ENCODE measurements at regions of chr18 and their contacts with region 1.

Region 1: GRCh38 chr18:58043491-58044379 is at the start of gene NEDD4L:
- DNase-seq: peak; percentile 92
- H3K4me3 ChIP-seq: peak within 1 kb of the TSS; percentile 50 to 83 (median 78)
- H3K27ac ChIP-seq: peak within 1 kb of the TSS; percentile 75 to 90 (median 87)
- H3K4me1 ChIP-seq: peaks cover 0 to 34% (median 22%) of the 10 kb centered on the region in 4 donors
- H3K27me3 ChIP-seq: no peaks in the 10 kb centered on the region
- CTCF ChIP-seq: peak; percentile 70 to 91 (median 80)
- EP300 ChIP-seq: no peak
- POLR2A ChIP-seq: no peak
- total RNA-seq, gene NEDD4L: 52.0 to 62.9 (median 55.9) TPM

Region 2: GRCh38 chr18:57621246-57621604 is 422.5 kb before region 1 on chr18:
- intact Hi-C with region 1: loop called (anchors 5 kb)
- DNase-seq: no peak
- H3K4me3 ChIP-seq: peak overlapping the region; percentile 67 to 92 (median 84)
- H3K27ac ChIP-seq: peak overlapping the region; percentile 89 to 95 (median 92)
- H3K4me1 ChIP-seq: peaks cover 0 to 26% (median 19%) of the 10 kb centered on the region in 4 donors
- H3K27me3 ChIP-seq: no peaks in the 10 kb centered on the region
- CTCF ChIP-seq: no peak
- EP300 ChIP-seq: no peak
- POLR2A ChIP-seq: no peak

Region 3: GRCh38 chr18:57881818-57882413 is 161.8 kb before region 1 on chr18:
- intact Hi-C with region 1: loop called (anchors 5 kb)
- DNase-seq: peak; percentile 83
- H3K4me3 ChIP-seq: no peak overlapping the region
- H3K27ac ChIP-seq: no peak overlapping the region
- H3K4me1 ChIP-seq: no peaks in the 10 kb centered on the region
- H3K27me3 ChIP-seq: no peaks in the 10 kb centered on the region
- CTCF ChIP-seq: peak; percentile 75 to 88 (median 84)
- EP300 ChIP-seq: no peak
- POLR2A ChIP-seq: no peak

Region 4: DNA sequence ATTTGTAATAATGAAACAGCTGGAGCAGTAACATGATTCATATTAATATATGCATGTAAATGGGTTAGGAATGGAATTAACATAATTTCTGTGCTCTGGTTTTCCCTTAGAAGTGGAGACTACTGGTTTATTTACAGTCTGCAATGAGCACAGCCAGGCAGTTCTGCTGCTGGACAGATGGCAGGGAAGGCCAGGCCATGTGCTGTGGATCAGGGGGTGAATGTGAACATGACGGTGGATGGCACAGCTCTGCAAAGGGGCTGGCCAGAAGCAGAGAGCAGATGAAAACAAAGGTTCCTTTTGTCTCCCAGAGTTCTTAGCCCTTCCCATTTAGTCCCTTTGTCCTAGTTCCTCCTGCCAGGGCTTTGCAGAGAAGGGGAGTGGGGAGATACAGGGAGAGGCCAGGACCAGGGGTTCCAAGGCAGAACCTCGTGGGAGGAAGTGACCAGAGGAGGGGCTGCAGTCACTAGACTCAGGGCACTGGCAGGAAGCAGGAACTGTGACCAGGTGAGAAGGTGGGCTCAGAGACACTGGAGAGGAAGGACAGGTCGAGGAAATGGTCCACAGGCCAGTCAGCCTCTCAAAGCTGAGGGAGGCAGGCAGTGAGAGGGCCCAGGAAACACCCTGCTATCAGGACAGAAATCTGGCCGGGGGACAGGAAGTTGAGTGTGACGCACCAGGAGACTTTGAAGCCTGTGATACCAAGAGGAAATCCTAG is 127.7 kb before region 1 on chr18:
- intact Hi-C with region 1: no loop called
- DNase-seq: no peak
- H3K4me3 ChIP-seq: no peak overlapping the region
- H3K27ac ChIP-seq: peak overlapping the region in 1 of 4 donors; percentile 5
- H3K4me1 ChIP-seq: peaks cover 0 to 7% (median 0%) of the 10 kb centered on the region in 4 donors
- H3K27me3 ChIP-seq: no peaks in the 10 kb centered on the region
- CTCF ChIP-seq: no peak
- EP300 ChIP-seq: no peak
- POLR2A ChIP-seq: no peak

Region 5: GRCh38 chr18:58148954-58149471 is 105.3 kb after region 1 on chr18:
- intact Hi-C with region 1: no loop called
- DNase-seq: no peak
- H3K4me3 ChIP-seq: no peak overlapping the region
- H3K27ac ChIP-seq: peak overlapping the region in 2 of 4 donors; percentile 58 to 79
- H3K4me1 ChIP-seq: peaks cover 0 to 28% (median 27%) of the 10 kb centered on the region in 4 donors
- H3K27me3 ChIP-seq: no peaks in the 10 kb centered on the region
- CTCF ChIP-seq: no peak
- EP300 ChIP-seq: no peak
- POLR2A ChIP-seq: peak in 1 of 2 donors; percentile 41

Region 6: GRCh38 chr18:58180738-58181353 is 137.1 kb after region 1 on chr18:
- intact Hi-C with region 1: loop called (anchors 1 kb)
- DNase-seq: no peak
- H3K4me3 ChIP-seq: no peak overlapping the region
- H3K27ac ChIP-seq: no peak overlapping the region
- H3K4me1 ChIP-seq: peaks cover 0 to 56% (median 39%) of the 10 kb centered on the region in 4 donors
- H3K27me3 ChIP-seq: no peaks in the 10 kb centered on the region
- CTCF ChIP-seq: peak; percentile 65 to 87 (median 76)
- EP300 ChIP-seq: no peak
- POLR2A ChIP-seq: no peak

Region 7: GRCh38 chr18:58316396-58317342 is 272.9 kb after region 1 on chr18:
- intact Hi-C with region 1: loop called (anchors 5 kb)
- DNase-seq: no peak
- H3K4me3 ChIP-seq: no peak overlapping the region
- H3K27ac ChIP-seq: peak overlapping the region; percentile 65 to 76 (median 74)
- H3K4me1 ChIP-seq: peaks cover 0 to 53% (median 42%) of the 10 kb centered on the region in 4 donors
- H3K27me3 ChIP-seq: no peaks in the 10 kb centered on the region
- CTCF ChIP-seq: no peak
- EP300 ChIP-seq: no peak
- POLR2A ChIP-seq: no peak

Region 8: DNA sequence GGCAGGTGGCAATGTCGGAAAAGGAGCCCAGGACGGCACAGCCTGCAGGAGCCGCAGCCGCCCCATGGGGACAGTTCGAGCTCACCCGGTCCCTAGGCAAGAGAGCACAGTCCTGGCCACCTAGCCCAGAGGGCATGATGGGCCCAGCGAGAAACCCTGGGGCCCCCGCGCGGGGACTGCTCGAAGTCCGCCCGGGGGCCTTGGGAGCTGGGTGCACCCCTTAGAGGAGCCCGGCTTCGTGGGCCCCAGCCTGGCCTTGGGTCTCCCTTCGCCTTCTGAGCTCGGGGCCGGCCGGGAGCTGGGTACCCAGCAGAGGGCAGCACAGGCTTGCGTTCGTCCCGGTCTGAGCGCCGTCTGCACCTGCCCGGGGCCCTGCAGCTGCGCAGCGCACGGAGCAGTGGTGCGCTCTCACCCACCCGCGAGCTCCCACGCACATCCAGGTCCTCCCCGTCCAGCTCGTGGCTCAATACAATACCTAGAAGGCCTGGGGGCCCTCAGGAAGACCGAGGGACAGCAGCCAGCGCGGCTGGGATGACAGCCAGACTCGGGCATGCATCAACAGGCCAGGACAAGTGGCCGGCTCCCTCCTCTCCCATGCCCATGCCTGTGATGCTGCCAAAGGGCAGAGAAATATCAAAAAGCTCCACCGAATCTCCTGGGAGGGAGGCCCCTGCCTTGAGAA is 724.7 kb after region 1 on chr18:
- intact Hi-C with region 1: loop called (anchors 5 kb)
- DNase-seq: peak; percentile 84
- H3K4me3 ChIP-seq: peak overlapping the region in 3 of 4 donors; percentile 26 to 40 (median 28)
- H3K27ac ChIP-seq: no peak overlapping the region
- H3K4me1 ChIP-seq: peaks cover 0 to 14% (median 10%) of the 10 kb centered on the region in 4 donors
- H3K27me3 ChIP-seq: no peaks in the 10 kb centered on the region
- CTCF ChIP-seq: peak; percentile 54 to 79 (median 66)
- EP300 ChIP-seq: no peak
- POLR2A ChIP-seq: no peak

Region 9: DNA sequence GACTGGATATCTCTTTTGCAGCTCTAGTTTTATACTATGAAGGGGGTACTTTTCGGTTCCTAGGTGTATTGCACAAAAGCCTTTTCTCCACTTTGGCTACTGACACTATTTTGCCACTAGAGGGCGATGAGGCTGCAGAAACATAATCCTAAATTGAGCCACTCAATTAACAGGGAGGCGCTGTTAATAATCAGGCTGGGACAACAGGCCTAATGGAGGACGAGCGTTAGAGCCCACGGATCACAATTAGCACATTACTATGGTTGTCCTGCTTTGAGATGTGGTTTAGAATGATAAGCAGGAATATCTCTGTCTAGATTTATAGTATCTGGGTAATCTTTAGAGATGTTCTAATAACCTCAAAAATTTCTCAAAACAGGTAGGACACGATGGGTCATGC is 1793.9 kb after region 1 on chr18:
- intact Hi-C with region 1: no loop called
- DNase-seq: no peak
- H3K4me3 ChIP-seq: no peak overlapping the region
- H3K27ac ChIP-seq: no peak overlapping the region
- H3K4me1 ChIP-seq: no peaks in the 10 kb centered on the region
- H3K27me3 ChIP-seq: no peaks in the 10 kb centered on the region
- CTCF ChIP-seq: peak; percentile 43 to 84 (median 68)
- EP300 ChIP-seq: no peak
- POLR2A ChIP-seq: no peak

Measured in sigmoid colon (tissue), 7 donors.